ENCODE measurements at regions of chr6 and their contacts with region 1.

Region 1: GRCh38 chr6:16964553-16965501 is 137.0 kb upstream of the STMND1 start:
- ATAC-seq: peak; percentile 93 to 100 (median 100)
- H3K4me3 ChIP-seq: no peak overlapping the region
- H3K27ac ChIP-seq: peak overlapping the region; percentile 32 to 42
- H3K4me1 ChIP-seq: peaks cover 6 to 7% of the 10 kb centered on the region in 2 donors

Region 2: DNA sequence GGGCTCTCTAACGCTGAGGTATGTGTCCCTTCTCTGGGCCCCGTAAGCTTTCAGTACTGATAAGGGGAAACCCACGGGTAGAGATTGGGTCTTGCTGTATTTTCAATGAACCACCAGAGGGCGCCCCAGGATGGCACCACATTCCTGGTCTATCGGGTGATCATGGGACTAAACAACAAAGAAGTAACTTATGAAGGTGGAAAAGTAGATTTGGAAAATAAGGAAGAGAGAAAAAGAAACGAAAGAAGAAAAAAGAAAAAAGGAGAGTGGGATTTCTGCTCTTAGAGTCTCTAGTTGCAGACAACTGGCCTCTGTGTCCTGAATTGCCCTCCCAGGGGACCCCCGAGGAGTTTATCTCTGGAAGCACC is 632.7 kb before region 1 on chr6:
- in situ Hi-C with region 1: loop called in 3 of 9 experiments (anchors 25 kb)
- ATAC-seq: peak; percentile 40 to 85 (median 78)
- H3K4me3 ChIP-seq: peak overlapping the region in 1 of 5 donors; percentile 10
- H3K27ac ChIP-seq: peak overlapping the region in 1 of 2 donors; percentile 24
- H3K4me1 ChIP-seq: peaks cover 5 to 7% of the 10 kb centered on the region in 2 donors

Region 3: GRCh38 chr6:16391451-16391912 is 573.3 kb before region 1 on chr6:
- in situ Hi-C with region 1: no loop called
- ATAC-seq: no peak
- H3K4me3 ChIP-seq: no peak overlapping the region
- H3K27ac ChIP-seq: no peak overlapping the region
- H3K4me1 ChIP-seq: peaks cover 0 to 3% of the 10 kb centered on the region in 2 donors

Region 4: GRCh38 chr6:16684896-16685554 is 279.8 kb before region 1 on chr6:
- in situ Hi-C with region 1: no loop called
- ATAC-seq: peak in 4 of 8 experiments; percentile 43 to 74 (median 58)
- H3K4me3 ChIP-seq: no peak overlapping the region
- H3K27ac ChIP-seq: no peak overlapping the region
- H3K4me1 ChIP-seq: no peaks in the 10 kb centered on the region

Region 5: DNA sequence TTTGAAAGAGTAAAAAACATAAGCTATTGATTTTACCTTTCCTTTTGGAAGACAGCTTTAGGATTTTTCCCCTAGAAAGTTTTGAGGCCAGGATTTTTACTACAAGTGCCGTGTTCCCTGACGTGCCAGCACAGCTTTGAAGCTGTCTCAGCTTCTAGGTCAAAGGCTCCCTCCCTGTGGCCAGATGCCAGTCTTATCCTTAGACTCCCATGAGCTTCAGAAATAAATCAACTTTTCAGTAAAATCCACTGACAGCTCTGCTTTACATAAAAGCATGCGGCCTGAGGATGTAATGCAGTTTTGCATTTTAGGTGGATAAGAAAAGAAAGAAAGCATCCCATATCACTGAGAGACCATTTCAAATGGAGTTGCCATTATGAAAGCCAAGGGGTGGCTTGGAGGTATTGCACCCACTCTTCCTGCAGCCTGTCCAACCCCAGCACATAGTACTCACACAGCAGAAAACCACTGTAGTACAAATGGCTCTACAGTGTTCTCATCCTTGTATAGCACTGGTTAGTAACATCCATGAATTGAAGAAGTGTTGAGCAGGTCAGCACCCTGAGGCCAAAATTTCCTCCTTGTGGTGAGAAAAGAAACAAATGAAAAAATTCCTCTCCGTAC is 188.3 kb before region 1 on chr6:
- in situ Hi-C with region 1: loop called in 7 of 9 experiments (anchors 25 kb)
- ATAC-seq: peak in 3 of 8 experiments; percentile 80 to 91 (median 88)
- H3K4me3 ChIP-seq: no peak overlapping the region
- H3K27ac ChIP-seq: no peak overlapping the region
- H3K4me1 ChIP-seq: peaks cover 9% of the 10 kb centered on the region in 2 donors